Activated naive CD8-positive, alpha-beta T cell treated with anti-CD3 and anti-CD28 coated beads, Interleukin-2, amount 10 ng/mL, durations not matched to agents 7 days and 5 days (primary cell): ENCODE measurements at regions of chr1 and their contacts with region 1.

Region 1: GRCh38 chr1:89611721-89612120 is 21.2 kb upstream of the LRRC8C start:
- DNase-seq: no peak
- ATAC-seq: peak; percentile 44
- H3K4me3 Mint-ChIP-seq: peak overlapping the region; percentile 81
- H3K27ac Mint-ChIP-seq: peak overlapping the region; percentile 99
- H3K4me1 Mint-ChIP-seq: peaks cover 58% of the 10 kb centered on the region
- H3K27me3 Mint-ChIP-seq: no peaks in the 10 kb centered on the region

Region 2: DNA sequence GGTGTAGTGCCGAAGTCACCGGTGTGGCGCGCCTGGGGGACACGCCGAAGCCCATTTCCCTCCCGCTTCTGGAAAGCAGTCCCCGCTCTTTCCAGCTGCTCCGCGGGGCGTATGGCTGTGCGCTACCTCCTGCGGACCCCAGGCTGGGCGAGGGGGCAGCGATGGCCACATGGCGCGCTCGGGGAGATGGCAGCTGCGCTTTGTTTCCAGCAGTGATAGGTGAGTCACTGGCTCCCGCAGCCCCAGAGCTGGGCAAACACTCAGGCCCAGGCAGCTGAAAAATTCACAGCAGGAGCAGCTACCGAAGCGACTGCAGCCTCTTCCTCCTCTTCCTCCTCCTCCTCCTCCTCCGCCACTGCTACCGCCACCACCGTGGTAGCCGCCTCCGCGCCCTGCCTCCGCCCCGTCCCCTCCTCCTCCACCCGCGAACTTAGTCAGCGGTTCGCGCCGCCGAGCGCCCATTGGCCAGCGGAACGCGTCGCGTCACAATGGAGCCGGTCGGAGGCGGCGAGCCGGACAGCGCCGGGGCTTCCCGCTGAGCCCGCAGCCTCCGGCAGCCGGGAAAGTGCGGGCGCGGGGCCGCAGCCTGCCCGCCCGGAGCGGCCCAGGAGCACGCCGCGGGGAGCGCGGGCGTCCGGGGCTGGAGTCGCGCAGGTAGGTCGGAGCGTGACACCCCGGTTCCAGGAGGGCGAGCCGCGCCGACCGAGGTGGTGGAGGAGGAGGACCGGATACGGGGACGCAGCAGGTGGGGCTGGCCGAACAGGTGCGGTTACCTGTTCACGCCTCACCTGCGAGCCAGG is 87.2 kb before region 1 on chr1 and contains the start of gene LRRC8B:
- POLR2A ChIA-PET with region 1: interaction called, 12 read pairs
- DNase-seq: peak; percentile 91
- ATAC-seq: peak; percentile 88
- H3K4me3 Mint-ChIP-seq: no peak within 1 kb of the TSS
- H3K27ac Mint-ChIP-seq: peak within 1 kb of the TSS; percentile 89
- H3K4me1 Mint-ChIP-seq: peaks cover 19% of the 10 kb centered on the region
- H3K27me3 Mint-ChIP-seq: no peaks in the 10 kb centered on the region
- total RNA-seq, gene LRRC8B: 12.8 to 13.9 TPM

Region 3: GRCh38 chr1:89581859-89582258 is 29.9 kb before region 1 on chr1:
- POLR2A ChIA-PET with region 1: no interaction called
- DNase-seq: no peak
- ATAC-seq: no peak
- H3K4me3 Mint-ChIP-seq: no peak overlapping the region
- H3K27ac Mint-ChIP-seq: no peak overlapping the region
- H3K4me1 Mint-ChIP-seq: peaks cover 4% of the 10 kb centered on the region
- H3K27me3 Mint-ChIP-seq: no peaks in the 10 kb centered on the region